ENCODE measurements at regions of chr9 and their contacts with region 1.

Region 1: DNA sequence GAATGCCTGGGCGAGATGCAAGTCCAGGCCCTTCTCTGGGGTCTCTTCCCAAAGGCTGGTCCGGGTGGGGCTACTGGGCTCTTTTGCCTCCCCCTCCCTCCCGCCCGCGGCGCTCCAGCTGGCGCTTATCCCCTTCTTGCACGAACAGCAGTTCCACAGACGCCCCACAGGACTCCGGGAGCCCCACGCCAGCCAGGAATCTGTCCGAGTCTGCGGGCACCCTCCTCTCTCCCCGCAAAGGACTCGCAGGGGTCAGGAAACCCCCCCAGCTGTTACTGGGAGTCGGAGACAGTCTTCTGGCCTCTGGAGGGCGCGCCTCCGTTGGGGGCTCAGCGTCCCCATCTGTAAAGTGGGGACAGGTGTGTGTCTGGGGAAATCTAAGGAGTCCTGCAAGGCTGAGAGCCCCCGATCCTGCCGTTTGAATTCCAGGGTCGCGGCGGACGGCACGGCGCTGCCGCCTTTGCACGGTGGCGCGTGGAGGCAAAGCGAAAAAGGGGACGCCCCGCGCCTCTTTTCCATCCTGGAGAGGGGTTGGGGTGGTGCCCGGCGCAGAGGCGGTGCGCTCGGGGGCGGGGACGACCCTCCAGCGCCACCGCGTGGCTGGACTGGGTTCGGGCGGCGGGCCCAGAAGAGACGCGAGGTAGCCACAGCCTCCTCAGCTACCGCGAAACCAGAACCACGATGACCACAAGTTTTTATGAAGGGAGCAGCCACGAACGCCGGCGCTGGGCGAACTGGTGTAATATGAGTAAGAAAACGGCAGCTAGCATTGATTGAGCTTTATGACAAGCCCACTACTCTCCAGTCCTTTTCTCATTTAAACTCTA is 2.9 kb upstream of the CCIN start:
- DNase-seq: no peak
- H3K4me3 ChIP-seq: peak overlapping the region; percentile 52
- H3K27ac ChIP-seq: peak overlapping the region; percentile 89
- H3K4me1 ChIP-seq: peaks cover 38% of the 10 kb centered on the region
- H3K27me3 ChIP-seq: no peaks in the 10 kb centered on the region
- CTCF ChIP-seq: peak; percentile 71 to 91 (median 84)
- POLR2A ChIP-seq: no peak

Region 2: DNA sequence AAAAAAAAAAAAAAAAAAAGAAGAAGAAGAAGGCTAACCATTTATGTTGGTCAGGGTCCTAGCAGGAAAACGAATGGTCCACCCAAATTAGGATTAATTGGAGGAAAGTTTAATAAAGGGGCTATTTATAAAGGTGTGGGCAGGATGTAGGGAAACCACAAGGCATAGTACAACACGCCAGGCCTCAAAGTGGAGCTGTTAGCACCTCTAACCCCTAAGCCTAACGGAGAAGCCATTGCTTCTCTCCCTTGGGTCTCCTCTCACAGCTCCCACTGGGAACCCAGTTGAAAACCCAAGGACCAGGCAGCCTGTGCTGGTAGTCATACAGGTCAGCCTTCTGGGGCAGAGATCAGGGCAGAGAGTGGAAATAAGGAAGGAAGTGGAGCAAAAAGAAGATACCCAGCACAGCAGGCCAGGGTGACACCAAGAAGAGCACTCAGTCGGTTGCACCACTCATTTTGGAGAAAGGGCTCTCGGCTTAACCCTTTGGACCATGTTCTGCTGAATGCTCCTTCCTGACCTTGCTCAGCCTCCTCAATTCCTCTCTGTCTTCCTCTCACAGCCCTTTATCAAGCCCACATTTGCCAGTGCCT is 38.6 kb before region 1 on chr9:
- intact Hi-C with region 1: loop called (anchors 5 kb)
- DNase-seq: no peak
- H3K4me3 ChIP-seq: no peak overlapping the region
- H3K27ac ChIP-seq: no peak overlapping the region
- H3K4me1 ChIP-seq: no peaks in the 10 kb centered on the region
- H3K27me3 ChIP-seq: no peaks in the 10 kb centered on the region
- CTCF ChIP-seq: no peak
- POLR2A ChIP-seq: no peak

Region 3: DNA sequence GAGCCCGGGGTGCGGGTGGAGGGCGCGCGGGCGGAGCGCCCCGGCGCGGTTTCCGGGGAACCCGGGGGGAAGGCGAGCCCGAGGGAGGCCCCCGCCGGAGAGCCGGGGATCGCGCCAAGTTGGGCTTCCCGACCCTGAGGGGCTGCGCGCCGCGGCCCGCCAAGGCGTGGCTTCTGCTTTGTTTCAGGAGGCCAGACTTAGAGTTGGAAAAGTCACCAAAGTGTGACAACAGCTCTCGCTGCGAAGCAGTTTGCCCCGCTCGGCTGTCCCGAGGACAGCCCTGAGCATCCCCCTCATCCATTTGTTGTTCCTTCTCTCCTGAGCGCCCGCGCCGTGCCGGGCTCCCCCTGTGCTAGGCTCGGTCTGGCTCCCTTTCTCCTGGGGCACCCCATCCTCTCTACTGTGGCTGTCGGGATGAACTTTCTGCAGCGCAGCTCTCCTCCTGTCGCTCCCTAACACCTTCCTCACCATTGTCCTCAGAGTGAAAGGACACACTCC is 29.4 kb before region 1 on chr9:
- intact Hi-C with region 1: loop called (anchors 1 kb)
- DNase-seq: no peak
- H3K4me3 ChIP-seq: peak overlapping the region; percentile 83 to 98
- H3K27ac ChIP-seq: peak overlapping the region; percentile 93
- H3K4me1 ChIP-seq: peaks cover 63% of the 10 kb centered on the region
- H3K27me3 ChIP-seq: no peaks in the 10 kb centered on the region
- CTCF ChIP-seq: no peak
- POLR2A ChIP-seq: no peak

Region 4: DNA sequence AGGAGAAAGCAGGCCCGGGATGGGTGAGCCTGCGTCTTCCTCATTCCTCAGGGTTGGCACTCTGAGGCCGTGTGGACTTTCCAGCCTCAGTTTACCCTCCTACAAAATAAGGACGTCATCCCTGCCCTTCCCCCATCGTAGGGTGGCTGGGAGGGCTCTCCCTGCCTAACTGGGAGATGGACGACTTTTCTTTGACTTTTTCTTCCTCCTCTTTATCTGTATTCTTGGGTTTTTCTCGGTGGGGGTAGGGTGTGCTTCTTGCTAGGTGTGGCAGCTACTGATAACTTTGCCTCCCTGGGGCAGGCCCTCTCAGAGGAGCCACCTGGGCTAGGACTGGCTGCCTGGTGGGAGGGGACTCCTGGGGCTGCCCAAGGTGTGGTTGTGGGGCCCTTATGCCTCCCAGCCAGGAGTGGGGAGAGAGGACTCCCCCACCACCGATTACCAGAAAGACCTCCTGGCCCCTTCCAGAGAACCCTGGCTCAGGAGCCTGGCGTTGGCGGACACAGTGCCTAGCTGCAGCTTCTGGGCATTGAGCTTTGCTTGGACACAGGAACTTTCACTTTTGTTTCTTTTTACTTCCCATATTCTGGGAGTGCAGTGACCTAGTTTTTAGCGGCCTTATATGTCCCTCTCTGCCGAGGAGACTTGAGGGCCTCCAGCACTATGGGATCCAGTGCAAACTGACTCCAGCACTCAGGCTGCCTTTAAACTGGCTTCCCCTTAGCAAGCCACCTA is 23.6 kb before region 1 on chr9:
- intact Hi-C with region 1: loop called (anchors 1 kb)
- DNase-seq: no peak
- H3K4me3 ChIP-seq: peak overlapping the region in 1 of 2 donors; percentile 41
- H3K27ac ChIP-seq: peak overlapping the region; percentile 88
- H3K4me1 ChIP-seq: peaks cover 79% of the 10 kb centered on the region
- H3K27me3 ChIP-seq: no peaks in the 10 kb centered on the region
- CTCF ChIP-seq: no peak
- POLR2A ChIP-seq: no peak

Measured in vagina (tissue), 2 donors.